Activated B cell treated with CpG ODN at 0.5 μM for 24 hours (primary cell): ENCODE measurements at regions of chr16 and their contacts with region 1.

Region 1: DNA sequence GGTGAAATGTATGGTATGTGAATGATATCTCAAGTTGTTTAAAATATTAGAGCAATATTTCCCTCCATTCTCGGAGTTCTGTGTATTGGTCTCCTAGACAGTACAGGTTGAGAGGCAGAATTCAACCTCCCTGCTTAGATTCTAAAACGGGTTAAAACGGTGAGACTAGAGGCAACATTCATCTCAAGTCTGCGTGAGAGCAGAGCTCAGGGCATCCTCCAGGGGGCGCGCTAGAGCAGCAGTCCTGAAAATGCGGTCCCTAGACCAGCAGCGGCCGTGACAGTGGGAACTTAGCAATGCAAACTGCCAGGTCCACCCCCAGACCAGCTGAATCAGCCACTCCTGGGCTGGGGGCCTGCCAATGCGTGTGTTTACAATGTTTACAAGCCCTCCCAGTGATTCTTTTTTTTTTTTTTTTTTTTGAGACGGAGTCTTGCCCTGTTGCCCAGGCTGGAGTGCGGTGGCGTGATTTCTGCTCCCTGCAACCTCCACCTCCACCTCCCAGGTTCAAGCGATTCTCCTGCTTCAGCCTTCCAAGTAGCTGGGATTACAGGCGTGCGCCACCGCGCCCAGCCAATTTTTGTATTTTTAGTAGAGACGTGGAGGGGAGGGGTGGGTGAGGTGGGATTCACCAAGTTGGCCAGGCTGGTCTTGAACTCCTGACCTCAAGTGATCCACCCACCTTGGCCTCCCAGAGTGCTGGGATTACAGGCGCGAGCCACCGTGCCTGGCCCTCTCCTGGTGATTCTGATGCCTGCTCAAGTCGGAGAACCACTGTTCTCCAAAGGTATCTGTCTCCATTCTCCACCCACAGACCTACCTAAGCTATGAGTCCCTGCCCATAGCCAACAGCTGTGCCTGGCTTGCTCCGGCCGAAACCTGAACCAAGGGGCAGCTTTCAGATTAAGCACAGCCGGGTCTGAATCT is 24.2 kb downstream of the KLHL36 start:
- DNase-seq: peak; percentile 75
- ATAC-seq: peak; percentile 91
- H3K4me3 Mint-ChIP-seq: no peak overlapping the region
- H3K27ac Mint-ChIP-seq: no peak overlapping the region
- H3K4me1 Mint-ChIP-seq: peaks cover 9% of the 10 kb centered on the region
- H3K27me3 Mint-ChIP-seq: no peaks in the 10 kb centered on the region
- CTCF ChIP-seq: peak; percentile 90

Region 2: DNA sequence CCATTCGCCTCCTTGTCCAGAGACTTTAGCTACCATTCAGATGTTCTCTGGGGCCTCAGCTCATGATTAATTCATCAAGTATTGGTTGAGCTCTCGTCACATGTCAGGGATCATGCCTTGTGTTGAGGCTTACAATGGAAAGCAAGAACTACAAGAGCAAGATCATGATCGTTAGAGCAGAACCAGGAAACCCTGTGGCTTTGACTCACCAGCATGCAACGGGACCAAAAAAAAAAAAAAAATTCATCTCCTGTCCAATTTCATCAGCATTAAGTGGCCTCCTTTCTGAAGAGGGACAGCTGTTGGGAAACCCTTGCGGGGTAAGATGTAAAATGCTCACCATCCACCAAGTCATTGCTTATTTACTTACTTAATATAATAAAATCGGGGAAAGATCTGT is 15.2 kb after region 1 on chr16:
- CTCF ChIA-PET with region 1: interaction called, 12 read pairs
- POLR2A ChIA-PET with region 1: interaction called, 4 read pairs
- intact Hi-C with region 1: no loop called
- DNase-seq: no peak
- ATAC-seq: peak; percentile 98
- H3K4me3 Mint-ChIP-seq: peak overlapping the region; percentile 13
- H3K27ac Mint-ChIP-seq: peak overlapping the region; percentile 54
- H3K4me1 Mint-ChIP-seq: peaks cover 22% of the 10 kb centered on the region
- H3K27me3 Mint-ChIP-seq: peaks cover 6% of the 10 kb centered on the region
- CTCF ChIP-seq: no peak

Region 3: DNA sequence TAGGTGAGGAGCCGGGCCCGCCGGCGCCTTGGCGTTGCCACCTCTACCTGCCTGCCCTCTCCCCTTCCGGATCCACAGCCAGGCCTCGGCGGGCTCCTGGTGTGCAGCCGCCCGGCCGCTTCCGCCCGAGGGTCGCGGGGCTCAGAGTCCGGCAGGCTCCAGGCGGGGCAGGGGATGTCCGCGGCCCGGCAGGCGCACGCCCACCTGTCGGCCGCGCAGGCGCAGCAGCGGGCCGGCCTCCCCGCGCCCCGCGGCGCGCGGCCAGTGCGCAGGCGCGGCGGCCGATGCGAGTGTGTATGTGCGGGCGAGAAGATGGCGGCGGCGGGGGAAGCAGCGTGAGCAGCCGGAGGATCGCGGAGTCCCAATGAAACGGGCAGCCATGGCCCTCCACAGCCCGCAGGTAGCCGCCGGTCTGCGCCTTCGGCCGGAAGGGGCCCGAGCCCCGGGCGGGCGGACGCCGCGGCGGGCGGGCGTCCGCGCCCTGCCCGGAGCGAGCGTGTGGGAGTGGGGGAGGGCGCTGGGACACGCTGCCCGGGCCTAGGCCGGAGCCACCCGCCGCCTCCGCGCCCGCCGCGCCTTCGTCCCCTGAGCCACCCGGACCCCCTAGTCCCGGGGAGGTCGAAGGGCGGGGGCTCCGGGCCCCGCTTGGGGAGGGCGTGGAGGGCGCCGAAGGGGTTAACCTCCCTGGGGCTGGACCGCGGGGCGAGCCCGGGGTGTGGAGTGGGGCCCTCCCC is 27.3 kb after region 1 on chr16 and contains the start of gene USP10:
- CTCF ChIA-PET with region 1: interaction called, 12 read pairs
- POLR2A ChIA-PET with region 1: interaction called, 8 read pairs
- intact Hi-C with region 1: loop called (anchors 1 kb)
- DNase-seq: peak; percentile 92
- ATAC-seq: peak; percentile 77
- H3K4me3 Mint-ChIP-seq: peak within 1 kb of the TSS; percentile 94
- H3K27ac Mint-ChIP-seq: peak within 1 kb of the TSS; percentile 92
- H3K4me1 Mint-ChIP-seq: peaks cover 48% of the 10 kb centered on the region
- H3K27me3 Mint-ChIP-seq: no peaks in the 10 kb centered on the region
- CTCF ChIP-seq: no peak
- total RNA-seq, gene USP10: 138 and 147 TPM in 2 replicates

Region 4: GRCh38 chr16:84738255-84739038 is 65.9 kb after region 1 on chr16:
- CTCF ChIA-PET with region 1: interaction called, 40 read pairs
- POLR2A ChIA-PET with region 1: interaction called, 7 read pairs
- intact Hi-C with region 1: loop called (anchors 1 kb)
- DNase-seq: peak; percentile 57
- ATAC-seq: peak; percentile 92
- H3K4me3 Mint-ChIP-seq: no peak overlapping the region
- H3K27ac Mint-ChIP-seq: peak overlapping the region; percentile 68
- H3K4me1 Mint-ChIP-seq: peaks cover 39% of the 10 kb centered on the region
- H3K27me3 Mint-ChIP-seq: no peaks in the 10 kb centered on the region
- CTCF ChIP-seq: peak; percentile 80